Adrenal gland (tissue), 19 donors: ENCODE measurements at regions of chr1 and their contacts with region 1.

Region 1: GRCh38 chr1:221203224-221204054 is 324.2 kb downstream of the HLX start:
- DNase-seq: peak; percentile 68 to 87 (median 78)
- H3K4me3 ChIP-seq: no peak overlapping the region
- H3K27ac ChIP-seq: no peak overlapping the region
- H3K4me1 ChIP-seq: no peaks in the 10 kb centered on the region
- H3K27me3 ChIP-seq: no peaks in the 10 kb centered on the region
- CTCF ChIP-seq: peak; percentile 65 to 87 (median 72)
- POLR2A ChIP-seq: no peak

Region 2: DNA sequence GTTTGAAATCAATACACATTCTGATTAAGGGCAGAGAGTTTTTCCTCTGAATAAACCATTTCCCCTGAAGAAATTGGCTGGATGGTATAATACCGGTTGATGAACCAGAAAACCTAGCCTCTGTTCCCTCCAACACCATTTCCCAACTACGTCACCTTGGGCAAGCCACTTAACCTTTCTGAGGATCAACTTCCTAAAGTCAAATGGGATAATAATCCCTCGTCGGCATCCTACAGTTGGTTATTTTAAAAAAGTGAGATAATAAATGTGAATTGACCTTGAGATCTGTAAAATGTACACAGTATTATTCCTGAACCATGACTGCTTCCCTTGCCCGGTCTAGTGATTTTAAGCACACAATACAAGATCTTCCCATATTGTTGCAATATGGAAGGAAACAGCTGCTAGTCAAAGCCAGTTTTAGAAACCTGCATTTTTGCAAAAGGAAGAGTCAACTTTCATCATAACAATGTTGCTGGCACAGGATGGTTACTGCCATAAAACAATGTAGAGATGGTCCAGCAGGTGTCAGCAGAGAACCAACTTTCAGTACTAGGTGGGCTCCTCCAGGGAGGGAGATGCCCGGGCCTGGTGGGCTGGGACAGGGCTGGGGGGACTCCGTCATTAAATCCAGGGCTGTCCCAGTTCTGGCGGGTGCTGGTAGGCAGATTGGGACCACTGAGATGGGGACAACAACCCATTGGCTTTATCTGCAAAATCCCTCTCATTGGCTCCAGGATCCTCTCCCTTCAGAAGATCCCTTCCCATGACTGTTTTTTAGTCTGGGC is 329.4 kb before region 1 on chr1:
- intact Hi-C with region 1: loop called in 1 of 2 experiments (anchors 5 kb)
- DNase-seq: peak in 6 of 7 donors; percentile 31 to 67 (median 48)
- H3K4me3 ChIP-seq: no peak overlapping the region
- H3K27ac ChIP-seq: no peak overlapping the region
- H3K4me1 ChIP-seq: peaks cover 0 to 5% of the 10 kb centered on the region in 2 donors
- H3K27me3 ChIP-seq: peaks cover 6% of the 10 kb centered on the region
- CTCF ChIP-seq: peak; percentile 41 to 71 (median 66)
- POLR2A ChIP-seq: no peak

Region 3: GRCh38 chr1:220879076-220879508 is 324.3 kb before region 1 on chr1 and contains the start of gene HLX:
- intact Hi-C with region 1: loop called (anchors 5 to 10 kb)
- DNase-seq: peak; percentile 78 to 89 (median 86)
- H3K4me3 ChIP-seq: peak within 1 kb of the TSS; percentile 50 to 90 (median 68)
- H3K27ac ChIP-seq: peak within 1 kb of the TSS; percentile 33 to 92 (median 87)
- H3K4me1 ChIP-seq: peaks cover 4 to 5% of the 10 kb centered on the region in 2 donors
- H3K27me3 ChIP-seq: peaks cover 6% of the 10 kb centered on the region
- CTCF ChIP-seq: no peak
- POLR2A ChIP-seq: peak; percentile 43 to 52
- total RNA-seq, gene HLX: 3.1 to 13.8 (median 6.9) TPM